ENCODE measurements at regions of chr19 and their contacts with region 1.

Region 1: GRCh38 chr19:48965040-48965805 is at the start of gene FTL:
- DNase-seq: peak; percentile 98
- ATAC-seq: peak; percentile 89 to 90
- total RNA-seq, gene FTL: 1,813 to 2,086 TPM

Region 2: GRCh38 chr19:48872182-48872883 is 92.9 kb before region 1 on chr19 and contains the start of gene PPP1R15A:
- intact Hi-C with region 1: loop called (anchors 5 to 10 kb)
- DNase-seq: peak; percentile 97
- ATAC-seq: peak; percentile 71 to 77
- total RNA-seq, gene PPP1R15A: 67.2 to 78.6 TPM

Measured in left cardiac atrium (tissue), 4 donors.